Activated CD8-positive, alpha-beta memory T cell treated with anti-CD3 and anti-CD28 coated beads, Interleukin-2, amount 10 ng/mL, durations not matched to agents 7 days and 5 days (primary cell): ENCODE measurements at regions of chr18 and their contacts with region 1.

Region 1: GRCh38 chr18:13558124-13558523 is 168.2 kb downstream of the FAM210A start:
- DNase-seq: peak; percentile 70
- ATAC-seq: peak; percentile 70
- H3K4me3 Mint-ChIP-seq: no peak overlapping the region
- H3K27ac Mint-ChIP-seq: peak overlapping the region; percentile 54
- H3K4me1 Mint-ChIP-seq: peaks cover 35% of the 10 kb centered on the region
- H3K27me3 Mint-ChIP-seq: no peaks in the 10 kb centered on the region

Region 2: GRCh38 chr18:13216092-13216582 is 342.0 kb before region 1 on chr18:
- CTCF ChIA-PET with region 1: interaction called, 11 read pairs
- DNase-seq: peak; percentile 68
- ATAC-seq: peak; percentile 46
- H3K4me3 Mint-ChIP-seq: peak overlapping the region; percentile 60
- H3K27ac Mint-ChIP-seq: no peak overlapping the region
- H3K4me1 Mint-ChIP-seq: peaks cover 17% of the 10 kb centered on the region
- H3K27me3 Mint-ChIP-seq: peaks cover 67% of the 10 kb centered on the region

Region 3: GRCh38 chr18:13471971-13472628 is 86.0 kb before region 1 on chr18:
- CTCF ChIA-PET with region 1: no interaction called
- DNase-seq: no peak
- ATAC-seq: no peak
- H3K4me3 Mint-ChIP-seq: no peak overlapping the region
- H3K27ac Mint-ChIP-seq: no peak overlapping the region
- H3K4me1 Mint-ChIP-seq: peaks cover 14% of the 10 kb centered on the region
- H3K27me3 Mint-ChIP-seq: no peaks in the 10 kb centered on the region

Region 4: GRCh38 chr18:13483316-13484270 is 74.5 kb before region 1 on chr18:
- CTCF ChIA-PET with region 1: no interaction called
- DNase-seq: no peak
- ATAC-seq: no peak
- H3K4me3 Mint-ChIP-seq: no peak overlapping the region
- H3K27ac Mint-ChIP-seq: no peak overlapping the region
- H3K4me1 Mint-ChIP-seq: peaks cover 5% of the 10 kb centered on the region
- H3K27me3 Mint-ChIP-seq: no peaks in the 10 kb centered on the region

Region 5: DNA sequence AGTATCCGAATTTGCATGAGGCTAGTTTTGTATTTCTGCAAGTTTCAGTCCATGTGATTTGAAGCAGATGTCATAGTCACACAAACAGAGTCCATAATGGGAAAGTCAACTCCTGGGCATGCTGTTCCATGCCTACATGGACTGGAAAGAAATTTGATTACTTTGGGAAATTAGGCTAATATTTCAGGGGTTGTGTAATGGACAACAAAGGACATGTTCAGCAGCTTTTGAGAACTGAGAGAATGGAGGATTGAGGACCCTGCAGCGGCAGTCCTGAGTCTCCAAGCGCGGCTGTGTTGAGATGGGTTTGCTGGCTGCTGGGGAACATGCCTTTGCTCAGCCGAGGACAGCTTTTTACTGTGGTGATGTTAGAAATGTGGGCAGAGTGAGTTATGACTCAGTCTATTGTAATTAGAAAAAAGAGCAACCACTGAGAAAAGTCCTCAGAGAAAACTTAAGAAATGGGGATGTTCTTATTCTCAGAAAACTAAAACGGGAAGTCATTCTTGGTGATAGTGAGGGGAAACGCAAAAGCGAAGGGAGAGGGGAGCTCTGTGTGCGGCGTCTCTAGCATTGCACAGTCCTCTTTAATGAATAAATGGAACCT is 19.1 kb after region 1 on chr18:
- CTCF ChIA-PET with region 1: interaction called, 17 read pairs
- DNase-seq: peak; percentile 79
- ATAC-seq: peak; percentile 88
- H3K4me3 Mint-ChIP-seq: peak overlapping the region; percentile 68
- H3K27ac Mint-ChIP-seq: peak overlapping the region; percentile 97
- H3K4me1 Mint-ChIP-seq: peaks cover 76% of the 10 kb centered on the region
- H3K27me3 Mint-ChIP-seq: no peaks in the 10 kb centered on the region

Region 6: DNA sequence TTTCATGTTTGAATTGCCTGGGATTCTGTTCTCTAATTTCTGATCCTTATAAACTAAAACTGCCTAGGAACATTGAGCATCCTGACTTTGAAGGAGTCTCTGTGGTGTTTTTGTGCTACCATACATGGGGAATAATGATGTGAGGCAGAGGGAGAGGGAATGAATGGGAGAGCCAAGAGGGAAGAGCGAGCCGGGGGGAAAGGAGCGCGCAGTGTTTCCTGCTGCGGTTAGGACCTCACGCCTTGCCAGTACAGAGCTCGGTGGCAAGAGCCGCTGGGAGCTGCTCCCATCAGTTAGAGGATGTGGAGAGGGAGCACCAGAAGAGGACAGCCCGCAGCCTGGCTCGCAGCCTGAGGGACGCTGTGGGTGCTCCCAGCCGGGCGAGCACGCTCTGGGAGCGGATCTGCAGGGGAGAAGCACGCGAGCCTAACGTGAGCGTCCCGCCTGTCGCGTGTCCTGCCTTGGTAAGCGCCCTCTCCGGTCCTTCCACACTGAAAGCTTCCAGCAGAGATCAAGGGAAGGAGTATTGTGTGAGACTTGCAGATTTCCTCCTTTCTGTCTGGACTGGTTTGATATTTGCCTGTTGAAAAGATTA is 53.6 kb after region 1 on chr18:
- CTCF ChIA-PET with region 1: interaction called, 122 read pairs
- DNase-seq: peak; percentile 63
- ATAC-seq: peak; percentile 6
- H3K4me3 Mint-ChIP-seq: peak overlapping the region; percentile 77
- H3K27ac Mint-ChIP-seq: peak overlapping the region; percentile 99
- H3K4me1 Mint-ChIP-seq: peaks cover 91% of the 10 kb centered on the region
- H3K27me3 Mint-ChIP-seq: no peaks in the 10 kb centered on the region

Region 7: DNA sequence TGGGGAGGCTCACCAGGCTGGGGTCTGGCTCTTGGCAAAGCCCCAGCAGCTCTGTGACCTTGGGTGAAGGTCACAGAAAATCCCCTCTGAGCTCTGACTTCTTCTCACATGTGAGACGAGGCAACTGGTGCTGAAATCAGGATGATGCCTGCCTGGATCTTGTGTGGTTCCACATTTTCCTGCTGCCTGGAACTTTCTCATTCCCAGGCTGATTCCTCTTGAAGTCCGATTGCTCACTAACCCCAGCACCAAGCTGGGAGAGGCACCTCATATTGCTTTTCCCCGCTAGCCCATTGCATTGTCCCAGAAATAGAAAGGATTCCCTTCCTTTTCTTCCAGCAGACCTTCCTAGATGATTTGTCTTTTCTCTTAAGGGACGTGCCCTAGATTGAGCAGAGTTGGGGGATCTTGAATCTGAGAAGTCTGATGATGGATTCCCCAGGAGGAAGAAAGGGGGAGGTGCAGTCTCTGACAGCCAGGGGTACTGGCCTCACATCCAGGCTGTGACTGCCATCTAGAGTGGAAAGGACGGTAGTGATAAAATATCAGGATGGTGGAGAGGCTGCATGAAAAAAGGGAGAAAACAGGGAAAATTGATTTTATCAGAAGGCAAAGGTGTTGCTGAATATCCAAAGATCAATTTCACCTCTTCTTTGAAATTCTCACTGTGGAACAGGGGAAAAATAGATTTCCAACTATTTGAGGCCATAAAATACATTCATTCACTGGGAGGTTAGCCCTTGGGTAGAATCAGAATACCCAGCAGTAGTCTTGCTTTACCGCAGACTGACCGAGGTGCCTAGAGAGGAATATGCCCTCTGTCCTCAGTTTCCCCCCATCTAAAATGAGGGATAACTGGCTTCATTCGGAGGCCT is 72.0 kb after region 1 on chr18:
- CTCF ChIA-PET with region 1: interaction called, 70 read pairs
- DNase-seq: peak; percentile 77
- ATAC-seq: peak; percentile 92
- H3K4me3 Mint-ChIP-seq: no peak overlapping the region
- H3K27ac Mint-ChIP-seq: peak overlapping the region; percentile 71
- H3K4me1 Mint-ChIP-seq: peaks cover 45% of the 10 kb centered on the region
- H3K27me3 Mint-ChIP-seq: no peaks in the 10 kb centered on the region

Region 8: GRCh38 chr18:13813271-13813849 is 255.2 kb after region 1 on chr18:
- CTCF ChIA-PET with region 1: interaction called, 12 read pairs
- DNase-seq: peak; percentile 72
- ATAC-seq: peak; percentile 82
- H3K4me3 Mint-ChIP-seq: no peak overlapping the region
- H3K27ac Mint-ChIP-seq: no peak overlapping the region
- H3K4me1 Mint-ChIP-seq: no peaks in the 10 kb centered on the region
- H3K27me3 Mint-ChIP-seq: peaks cover 23% of the 10 kb centered on the region